Panc1 (cell line): ENCODE measurements at regions of chr14 and their contacts with region 1.

Region 1: GRCh38 chr14:36502558-36503508 is 17.2 kb downstream of the NKX2-1 start:
- DNase-seq: no peak
- ATAC-seq: no peak
- H3K4me3 ChIP-seq: no peak overlapping the region
- H3K27ac ChIP-seq: no peak overlapping the region
- H3K4me1 ChIP-seq: no peaks in the 10 kb centered on the region
- H3K27me3 ChIP-seq: peaks cover 7% of the 10 kb centered on the region
- CTCF ChIP-seq: no peak

Region 2: GRCh38 chr14:36941783-36942521 is 439.1 kb after region 1 on chr14:
- CTCF ChIA-PET with region 1: interaction called, 10 read pairs
- POLR2A ChIA-PET with region 1: no interaction called
- in situ Hi-C with region 1: no loop called
- intact Hi-C with region 1: no loop called
- DNase-seq: peak; percentile 64
- ATAC-seq: peak; percentile 87
- H3K4me3 ChIP-seq: no peak overlapping the region
- H3K27ac ChIP-seq: no peak overlapping the region
- H3K4me1 ChIP-seq: no peaks in the 10 kb centered on the region
- H3K27me3 ChIP-seq: no peaks in the 10 kb centered on the region
- CTCF ChIP-seq: peak; percentile 93